Right cardiac atrium (tissue), 5 donors: ENCODE measurements at regions of chr6 and their contacts with region 1.

Region 1: GRCh38 chr6:127464881-127465459 is 5.8 kb upstream of the KIAA0408 start:
- DNase-seq: peak; percentile 63 to 77 (median 66)
- ATAC-seq: peak; percentile 91
- H3K4me3 ChIP-seq: no peak overlapping the region
- H3K27ac ChIP-seq: no peak overlapping the region
- H3K4me1 ChIP-seq: no peaks in the 10 kb centered on the region
- H3K27me3 ChIP-seq: no peaks in the 10 kb centered on the region

Region 2: GRCh38 chr6:127120787-127121636 is 344.0 kb before region 1 on chr6:
- intact Hi-C with region 1: no loop called
- DNase-seq: peak; percentile 78 to 87 (median 81)
- ATAC-seq: peak; percentile 87 to 88
- H3K4me3 ChIP-seq: peak overlapping the region; percentile 31
- H3K27ac ChIP-seq: no peak overlapping the region
- H3K4me1 ChIP-seq: no peaks in the 10 kb centered on the region
- H3K27me3 ChIP-seq: no peaks in the 10 kb centered on the region

Region 3: GRCh38 chr6:127547215-127547614 is 82.2 kb after region 1 on chr6:
- intact Hi-C with region 1: loop called in 1 of 4 experiments (anchors 10 kb)
- DNase-seq: no peak
- ATAC-seq: no peak
- H3K4me3 ChIP-seq: no peak overlapping the region
- H3K27ac ChIP-seq: no peak overlapping the region
- H3K4me1 ChIP-seq: no peaks in the 10 kb centered on the region
- H3K27me3 ChIP-seq: no peaks in the 10 kb centered on the region

Region 4: GRCh38 chr6:128252341-128253176 is 787.6 kb after region 1 on chr6:
- intact Hi-C with region 1: no loop called
- DNase-seq: no peak
- ATAC-seq: no peak
- H3K4me3 ChIP-seq: no peak overlapping the region
- H3K27ac ChIP-seq: no peak overlapping the region
- H3K4me1 ChIP-seq: no peaks in the 10 kb centered on the region
- H3K27me3 ChIP-seq: no peaks in the 10 kb centered on the region